Gastrocnemius medialis (tissue), 4 donors: ENCODE measurements at regions of chr10 and their contacts with region 1.

Region 1: DNA sequence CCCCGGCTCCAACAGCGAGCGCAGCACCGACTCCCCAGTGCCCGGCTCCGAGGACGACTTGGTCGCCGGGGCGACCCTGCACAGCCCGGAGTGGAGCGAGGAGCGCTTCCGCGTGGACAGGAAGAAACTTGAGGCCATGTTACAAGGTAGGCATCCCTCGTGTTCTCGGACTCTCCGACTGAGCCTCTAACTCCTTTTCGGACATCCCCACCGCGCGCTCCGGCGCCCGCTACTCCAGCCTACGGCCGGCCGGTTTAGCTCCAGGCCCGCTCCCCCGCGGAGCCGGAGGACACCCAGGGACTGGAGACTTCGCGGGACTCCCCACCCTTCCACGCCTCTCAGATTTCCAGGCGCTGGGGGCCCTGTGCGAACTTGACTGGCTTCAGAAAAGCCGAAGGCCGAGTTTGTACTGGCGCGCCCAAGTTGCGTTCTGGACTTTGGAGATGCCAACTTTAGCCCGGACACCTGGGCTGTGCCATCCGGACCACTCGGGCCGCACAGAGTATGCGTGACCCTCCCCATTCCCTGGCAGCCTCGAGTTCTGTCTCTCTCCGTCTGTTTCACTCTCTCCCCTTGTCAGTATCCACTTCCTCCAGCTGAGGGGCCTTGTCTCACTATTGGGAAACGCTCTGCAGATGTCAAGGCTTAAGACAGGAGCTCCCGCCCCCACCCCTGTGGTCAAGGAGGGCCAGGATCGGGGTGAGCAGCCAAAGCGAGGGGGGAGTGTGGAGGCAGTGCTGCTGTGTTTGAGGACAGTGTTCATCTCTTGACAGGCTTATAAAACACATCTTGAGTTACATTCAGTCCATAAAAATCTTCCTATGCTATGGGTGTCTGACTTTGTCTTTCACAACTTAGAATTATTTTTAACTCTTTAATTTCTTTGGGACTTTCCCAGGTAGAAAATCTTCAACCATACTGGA is 777 bp downstream of the BICC1 start:
- DNase-seq: peak; percentile 81 to 82
- ATAC-seq: peak; percentile 64 to 72
- H3K4me3 ChIP-seq: peak overlapping the region; percentile 64 to 76 (median 71)
- H3K27ac ChIP-seq: peak overlapping the region; percentile 82 to 86 (median 84)
- H3K4me1 ChIP-seq: peaks cover 8 to 12% of the 10 kb centered on the region in 2 donors
- H3K27me3 ChIP-seq: no peaks in the 10 kb centered on the region
- CTCF ChIP-seq: no peak
- POLR2A ChIP-seq: peak; percentile 31 to 67

Region 2: GRCh38 chr10:58299580-58299979 is 213.9 kb before region 1 on chr10:
- in situ Hi-C with region 1: no loop called
- intact Hi-C with region 1: no loop called
- DNase-seq: peak; percentile 4 to 34
- ATAC-seq: peak; percentile 73 to 77
- H3K4me3 ChIP-seq: no peak overlapping the region
- H3K27ac ChIP-seq: no peak overlapping the region
- H3K4me1 ChIP-seq: peaks cover 3 to 8% of the 10 kb centered on the region in 2 donors
- H3K27me3 ChIP-seq: no peaks in the 10 kb centered on the region
- CTCF ChIP-seq: peak; percentile 60 to 81 (median 78)
- POLR2A ChIP-seq: no peak

Region 3: DNA sequence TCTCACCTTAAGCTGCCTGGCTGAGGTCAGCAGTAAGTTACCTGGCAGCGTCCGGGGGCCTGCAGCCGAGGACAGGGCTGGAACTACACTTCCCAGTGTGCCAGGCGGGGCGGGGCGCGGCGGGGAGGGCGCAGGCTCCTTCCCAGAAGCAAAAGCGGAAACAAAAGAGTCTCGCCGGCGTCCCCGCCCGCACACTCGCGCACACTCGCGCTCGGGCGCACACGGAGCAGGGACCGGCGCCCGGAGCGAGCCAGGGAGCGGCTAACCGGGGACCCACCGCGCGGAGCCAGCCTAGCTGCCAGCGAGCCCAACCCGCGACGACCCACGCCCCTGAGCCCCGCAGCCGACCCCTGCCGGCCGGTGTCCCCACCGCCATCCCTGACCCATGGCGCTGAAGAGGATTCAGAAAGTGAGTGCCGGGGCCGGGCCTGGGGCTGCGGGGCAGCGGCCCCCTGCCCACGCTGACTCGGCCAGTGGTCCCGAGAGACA is 178.6 kb before region 1 on chr10 and contains the start of gene UBE2D1:
- in situ Hi-C with region 1: no loop called
- intact Hi-C with region 1: loop called (anchors 5 kb)
- DNase-seq: peak; percentile 90
- ATAC-seq: peak; percentile 63 to 78
- H3K4me3 ChIP-seq: peak within 1 kb of the TSS; percentile 78 to 98 (median 92)
- H3K27ac ChIP-seq: peak within 1 kb of the TSS; percentile 96 to 100 (median 98)
- H3K4me1 ChIP-seq: peaks cover 19 to 34% of the 10 kb centered on the region in 2 donors
- H3K27me3 ChIP-seq: no peaks in the 10 kb centered on the region
- CTCF ChIP-seq: peak in 4 of 5 experiments; percentile 14 to 53 (median 26)
- POLR2A ChIP-seq: peak; percentile 98
- total RNA-seq, gene UBE2D1: 62.0 to 178 (median 81.6) TPM

Region 4: GRCh38 chr10:58414270-58415041 is 99.0 kb before region 1 on chr10:
- in situ Hi-C with region 1: no loop called
- intact Hi-C with region 1: loop called (anchors 10 kb)
- DNase-seq: no peak
- ATAC-seq: peak; percentile 53 to 74
- H3K4me3 ChIP-seq: no peak overlapping the region
- H3K27ac ChIP-seq: no peak overlapping the region
- H3K4me1 ChIP-seq: no peaks in the 10 kb centered on the region
- H3K27me3 ChIP-seq: no peaks in the 10 kb centered on the region
- CTCF ChIP-seq: peak in 3 of 5 experiments; percentile 16 to 21 (median 18)
- POLR2A ChIP-seq: no peak

Region 5: DNA sequence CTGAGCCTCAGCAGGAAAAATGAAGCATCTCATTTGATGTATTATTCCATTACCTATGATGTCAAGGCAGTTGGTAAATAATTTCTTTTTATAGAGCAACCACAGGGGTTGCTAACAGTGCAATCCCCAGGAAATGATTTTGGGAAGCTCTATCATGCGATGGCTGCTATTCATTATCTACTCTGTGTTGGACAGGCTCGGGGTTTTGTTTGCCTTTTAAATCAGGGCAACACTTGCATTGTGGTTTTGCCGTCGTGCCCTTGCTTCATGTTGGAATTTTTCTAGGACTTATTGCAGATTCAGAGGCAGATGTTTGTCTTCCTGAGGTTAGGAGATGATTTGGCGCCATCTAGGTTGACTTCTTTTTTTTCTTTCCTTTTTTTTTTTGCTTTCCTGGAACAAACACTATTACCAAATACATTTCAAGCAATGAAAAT is 127.7 kb after region 1 on chr10:
- in situ Hi-C with region 1: loop called in 1 of 4 experiments (anchors 10 kb)
- intact Hi-C with region 1: loop called (anchors 1 kb)
- DNase-seq: no peak
- ATAC-seq: peak; percentile 52 to 53
- H3K4me3 ChIP-seq: peak overlapping the region in 1 of 4 donors; percentile 11
- H3K27ac ChIP-seq: peak overlapping the region; percentile 56 to 76 (median 62)
- H3K4me1 ChIP-seq: peaks cover 14 to 41% of the 10 kb centered on the region in 2 donors
- H3K27me3 ChIP-seq: no peaks in the 10 kb centered on the region
- CTCF ChIP-seq: peak in 1 of 5 experiments; percentile 26
- POLR2A ChIP-seq: no peak

Region 6: GRCh38 chr10:58781873-58782488 is 268.5 kb after region 1 on chr10:
- in situ Hi-C with region 1: no loop called
- intact Hi-C with region 1: loop called (anchors 5 kb)
- DNase-seq: no peak
- ATAC-seq: peak; percentile 50 to 61
- H3K4me3 ChIP-seq: no peak overlapping the region
- H3K27ac ChIP-seq: peak overlapping the region; percentile 13 to 55 (median 40)
- H3K4me1 ChIP-seq: peaks cover 10 to 12% of the 10 kb centered on the region in 2 donors
- H3K27me3 ChIP-seq: no peaks in the 10 kb centered on the region
- CTCF ChIP-seq: peak in 4 of 5 experiments; percentile 33 to 60 (median 53)
- POLR2A ChIP-seq: no peak

Region 7: GRCh38 chr10:58952747-58953466 is 439.5 kb after region 1 on chr10:
- in situ Hi-C with region 1: no loop called
- intact Hi-C with region 1: no loop called
- DNase-seq: peak in 1 of 2 donors; percentile 18
- ATAC-seq: peak; percentile 46 to 59
- H3K4me3 ChIP-seq: no peak overlapping the region
- H3K27ac ChIP-seq: peak overlapping the region; percentile 33 to 53 (median 46)
- H3K4me1 ChIP-seq: peaks cover 6 to 31% of the 10 kb centered on the region in 2 donors
- H3K27me3 ChIP-seq: no peaks in the 10 kb centered on the region
- CTCF ChIP-seq: peak; percentile 61 to 83 (median 73)
- POLR2A ChIP-seq: no peak